GM12878 (cell line): ENCODE measurements at regions of chr6 and their contacts with region 1.

Region 1: DNA sequence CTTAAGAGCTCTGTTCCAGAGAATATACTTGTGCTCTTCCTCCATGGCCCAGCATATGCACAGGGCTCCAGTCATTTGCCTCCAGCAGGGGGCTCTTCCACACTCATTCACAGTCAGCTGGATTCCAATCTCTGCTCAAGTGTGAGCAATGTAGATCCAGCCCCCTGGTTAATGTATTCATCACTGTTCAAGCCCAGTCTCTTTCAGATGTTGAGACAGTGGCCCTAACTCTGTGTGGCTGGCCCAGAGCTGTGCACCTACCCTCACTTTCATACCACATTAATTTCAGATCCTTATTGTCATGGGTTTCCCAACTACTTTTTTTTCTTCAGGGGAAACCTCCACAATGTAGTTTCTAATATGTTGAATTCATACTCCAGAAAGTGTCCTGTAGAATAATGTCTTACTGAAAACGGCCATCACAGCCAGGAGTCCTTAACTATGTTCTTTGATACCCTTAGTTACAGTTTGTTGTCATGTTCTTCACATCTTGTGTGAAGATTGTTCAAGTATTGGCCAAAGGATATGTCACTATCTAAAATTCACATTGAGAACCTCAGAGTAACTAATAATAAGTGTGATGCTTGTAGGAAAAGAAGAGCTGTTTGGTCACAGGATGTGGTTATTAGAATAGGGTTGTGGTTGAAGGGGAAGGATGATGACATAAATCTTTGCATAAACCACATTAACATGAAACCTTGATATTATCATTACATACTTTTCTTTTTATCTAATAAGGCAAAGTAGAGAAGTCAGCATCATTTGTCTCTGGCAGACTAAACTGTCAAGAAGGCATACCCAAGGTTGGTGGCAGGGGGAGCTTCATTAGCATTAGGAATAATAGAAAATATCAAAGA is 14.4 kb upstream of the HLA-DQA1 start:
- DNase-seq: peak; percentile 96
- ATAC-seq: peak; percentile 91
- H3K4me3 ChIP-seq: peak overlapping the region; percentile 54
- H3K27ac ChIP-seq: peak overlapping the region; percentile 98
- H3K4me1 ChIP-seq: peaks cover 24% of the 10 kb centered on the region
- H3K27me3 ChIP-seq: no peaks in the 10 kb centered on the region
- CTCF ChIP-seq: peak; percentile 33 to 49 (median 48); a peak in 5 of 6 replicates
- EP300 ChIP-seq: peak in 1 of 2 experiments; percentile 96
- POLR2A ChIP-seq: peak; percentile 72
- RAD21 ChIP-seq: peak; percentile 40; the same call in 1 of the 2 replicates

Region 2: DNA sequence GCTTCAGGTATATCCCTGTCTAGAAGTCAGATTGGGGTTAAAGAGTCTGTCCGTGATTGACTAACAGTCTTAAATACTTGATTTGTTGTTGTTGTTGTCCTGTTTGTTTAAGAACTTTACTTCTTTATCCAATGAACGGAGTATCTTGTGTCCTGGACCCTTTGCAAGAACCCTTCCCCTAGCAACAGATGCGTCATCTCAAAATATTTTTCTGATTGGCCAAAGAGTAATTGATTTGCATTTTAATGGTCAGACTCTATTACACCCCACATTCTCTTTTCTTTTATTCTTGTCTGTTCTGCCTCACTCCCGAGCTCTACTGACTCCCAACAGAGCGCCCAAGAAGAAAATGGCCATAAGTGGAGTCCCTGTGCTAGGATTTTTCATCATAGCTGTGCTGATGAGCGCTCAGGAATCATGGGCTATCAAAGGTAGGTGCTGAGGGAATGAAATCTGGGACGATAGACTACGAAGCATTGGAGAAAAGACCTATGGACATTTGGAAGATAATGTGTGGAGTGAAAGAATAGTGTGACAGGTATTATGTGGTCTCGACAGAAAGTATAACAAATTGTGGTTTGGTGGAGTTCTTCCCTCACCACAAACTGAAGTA is 183.1 kb before region 1 on chr6 and contains the start of gene HLA-DRA:
- CTCF ChIA-PET with region 1: interaction called, 3 read pairs
- POLR2A ChIA-PET with region 1: interaction called, 11 read pairs
- RAD21 ChIA-PET with region 1: interaction called, 6 read pairs
- SMC1A ChIA-PET with region 1: interaction called, 6 read pairs
- in situ Hi-C with region 1: no loop called
- intact Hi-C with region 1: loop called (anchors 5 kb)
- DNase-seq: peak; percentile 99
- ATAC-seq: peak; percentile 71
- H3K4me3 ChIP-seq: peak within 1 kb of the TSS; percentile 99
- H3K27ac ChIP-seq: peak within 1 kb of the TSS; percentile 100
- H3K4me1 ChIP-seq: peaks cover 29% of the 10 kb centered on the region
- H3K27me3 ChIP-seq: no peaks in the 10 kb centered on the region
- CTCF ChIP-seq: no peak
- EP300 ChIP-seq: peak; percentile 66 to 68; a peak in 3 of 4 replicates
- POLR2A ChIP-seq: peak; percentile 95
- RAD21 ChIP-seq: no peak
- polyA plus RNA-seq, gene HLA-DRA: 4,131 to 6,024 TPM

Region 3: GRCh38 chr6:32522302-32523047 is 100.3 kb before region 1 on chr6:
- CTCF ChIA-PET with region 1: no interaction called
- POLR2A ChIA-PET with region 1: no interaction called
- RAD21 ChIA-PET with region 1: no interaction called
- SMC1A ChIA-PET with region 1: no interaction called
- in situ Hi-C with region 1: no loop called
- intact Hi-C with region 1: no loop called
- DNase-seq: no peak
- ATAC-seq: no peak
- H3K4me3 ChIP-seq: no peak overlapping the region
- H3K27ac ChIP-seq: no peak overlapping the region
- H3K4me1 ChIP-seq: no peaks in the 10 kb centered on the region
- H3K27me3 ChIP-seq: no peaks in the 10 kb centered on the region
- CTCF ChIP-seq: no peak
- EP300 ChIP-seq: no peak
- POLR2A ChIP-seq: no peak
- RAD21 ChIP-seq: no peak

Region 4: GRCh38 chr6:32609731-32610640 is 12.8 kb before region 1 on chr6:
- CTCF ChIA-PET with region 1: interaction called, 13 read pairs
- POLR2A ChIA-PET with region 1: interaction called, 50 read pairs
- RAD21 ChIA-PET with region 1: interaction called, 11 read pairs
- SMC1A ChIA-PET with region 1: interaction called, 36 read pairs
- in situ Hi-C with region 1: no loop called
- intact Hi-C with region 1: loop called (anchors 1 kb)
- DNase-seq: peak; percentile 100
- ATAC-seq: peak; percentile 84
- H3K4me3 ChIP-seq: peak overlapping the region; percentile 3; the same call in 1 of the 2 replicates
- H3K27ac ChIP-seq: peak overlapping the region; percentile 95
- H3K4me1 ChIP-seq: peaks cover 17% of the 10 kb centered on the region
- H3K27me3 ChIP-seq: no peaks in the 10 kb centered on the region
- CTCF ChIP-seq: no peak
- EP300 ChIP-seq: peak; percentile 30 to 68; a peak in 2 of 4 replicates
- POLR2A ChIP-seq: peak; percentile 59; the same call in 1 of the 2 replicates
- RAD21 ChIP-seq: no peak

Region 5: GRCh38 chr6:32642720-32643106 is 19.9 kb after region 1 on chr6:
- CTCF ChIA-PET with region 1: interaction called, 7 read pairs
- POLR2A ChIA-PET with region 1: interaction called, 117 read pairs
- RAD21 ChIA-PET with region 1: interaction called, 102 read pairs
- SMC1A ChIA-PET with region 1: interaction called, 124 read pairs
- in situ Hi-C with region 1: no loop called
- intact Hi-C with region 1: loop called (anchors 2 kb)
- DNase-seq: no peak
- ATAC-seq: peak; percentile 45
- H3K4me3 ChIP-seq: no peak overlapping the region
- H3K27ac ChIP-seq: no peak overlapping the region
- H3K4me1 ChIP-seq: peaks cover 4% of the 10 kb centered on the region
- H3K27me3 ChIP-seq: no peaks in the 10 kb centered on the region
- CTCF ChIP-seq: peak in 1 of 3 experiments; percentile 2; a peak in 1 of 6 replicates
- EP300 ChIP-seq: no peak
- POLR2A ChIP-seq: peak; percentile 53; the same call in 1 of the 2 replicates
- RAD21 ChIP-seq: no peak

Region 6: GRCh38 chr6:32659856-32660595 is 37.3 kb after region 1 on chr6:
- CTCF ChIA-PET with region 1: interaction called, 10 read pairs
- POLR2A ChIA-PET with region 1: interaction called, 30 read pairs
- RAD21 ChIA-PET with region 1: interaction called, 12 read pairs
- SMC1A ChIA-PET with region 1: interaction called, 10 read pairs
- in situ Hi-C with region 1: no loop called
- intact Hi-C with region 1: loop called (anchors 5 kb)
- DNase-seq: no peak
- ATAC-seq: peak; percentile 71
- H3K4me3 ChIP-seq: no peak overlapping the region
- H3K27ac ChIP-seq: peak overlapping the region; percentile 46; the same call in 1 of the 2 replicates
- H3K4me1 ChIP-seq: no peaks in the 10 kb centered on the region; the same call in 1 of the 2 replicates
- H3K27me3 ChIP-seq: no peaks in the 10 kb centered on the region
- CTCF ChIP-seq: no peak
- EP300 ChIP-seq: no peak
- POLR2A ChIP-seq: peak; percentile 35; the same call in 1 of the 2 replicates
- RAD21 ChIP-seq: no peak

Region 7: DNA sequence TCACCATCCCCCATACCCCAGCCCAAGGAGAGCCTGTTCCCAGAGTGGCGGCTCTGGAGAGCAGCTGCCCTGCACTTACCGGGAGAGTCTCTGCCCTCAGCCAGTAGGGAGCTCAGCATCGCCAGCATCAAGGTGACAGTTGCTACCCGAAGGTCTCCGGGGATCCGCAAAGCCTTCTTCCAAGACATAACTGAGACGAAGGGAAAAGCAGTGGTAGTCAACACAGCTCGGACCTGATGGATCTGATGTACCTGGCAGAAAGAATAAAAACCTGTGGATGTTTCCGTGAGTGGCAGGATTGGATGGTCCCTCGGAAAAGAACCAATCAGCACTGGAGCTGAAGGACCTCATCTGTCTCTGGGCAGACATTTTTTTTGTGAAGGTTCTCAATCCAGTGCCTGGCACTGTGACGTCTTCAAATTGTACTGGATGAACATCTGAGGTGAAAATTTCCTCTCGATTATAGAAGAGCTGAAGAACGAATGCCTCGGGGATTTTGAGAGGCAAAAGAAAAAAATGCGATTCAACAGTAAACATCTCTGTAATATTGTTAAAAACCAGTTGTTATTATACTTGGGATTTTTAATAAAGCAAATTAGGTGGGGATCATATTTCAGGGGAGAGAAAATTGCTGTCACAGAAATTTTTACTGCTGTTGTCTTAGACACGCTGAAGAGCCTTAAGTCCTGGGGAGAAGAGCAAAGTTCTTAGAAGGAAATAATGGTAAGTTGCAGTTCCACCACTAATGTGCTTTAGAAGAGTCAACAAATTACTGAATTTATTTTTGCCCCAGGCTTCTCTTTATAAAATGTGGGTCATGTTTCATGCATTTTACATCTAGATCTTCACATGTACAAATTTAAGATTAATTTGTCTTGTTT is 43.9 kb after region 1 on chr6 and contains the start of gene HLA-DQB1:
- CTCF ChIA-PET with region 1: interaction called, 10 read pairs
- POLR2A ChIA-PET with region 1: interaction called, 30 read pairs
- RAD21 ChIA-PET with region 1: interaction called, 12 read pairs
- SMC1A ChIA-PET with region 1: interaction called, 11 read pairs
- in situ Hi-C with region 1: no loop called
- intact Hi-C with region 1: loop called (anchors 5 kb)
- DNase-seq: peak; percentile 77
- ATAC-seq: peak; percentile 70
- H3K4me3 ChIP-seq: peak within 1 kb of the TSS; percentile 55; the same call in 1 of the 2 replicates
- H3K27ac ChIP-seq: peak within 1 kb of the TSS; percentile 92
- H3K4me1 ChIP-seq: peaks cover 22% of the 10 kb centered on the region
- H3K27me3 ChIP-seq: no peaks in the 10 kb centered on the region
- CTCF ChIP-seq: no peak
- EP300 ChIP-seq: no peak
- POLR2A ChIP-seq: peak; percentile 72
- RAD21 ChIP-seq: no peak
- polyA plus RNA-seq, gene HLA-DQB1: 38.1 to 66.1 TPM

Region 8: GRCh38 chr6:32685603-32686002 is 62.8 kb after region 1 on chr6:
- CTCF ChIA-PET with region 1: interaction called, 12 read pairs
- POLR2A ChIA-PET with region 1: interaction called, 8 read pairs
- RAD21 ChIA-PET with region 1: interaction called, 33 read pairs
- SMC1A ChIA-PET with region 1: interaction called, 26 read pairs
- in situ Hi-C with region 1: no loop called
- intact Hi-C with region 1: loop called (anchors 1 kb)
- DNase-seq: peak; percentile 95
- ATAC-seq: peak; percentile 89
- H3K4me3 ChIP-seq: no peak overlapping the region
- H3K27ac ChIP-seq: peak overlapping the region; percentile 40; the same call in 1 of the 2 replicates
- H3K4me1 ChIP-seq: peaks cover 16% of the 10 kb centered on the region; the same call in 1 of the 2 replicates
- H3K27me3 ChIP-seq: no peaks in the 10 kb centered on the region
- CTCF ChIP-seq: no peak
- EP300 ChIP-seq: peak; percentile 74 to 99; a peak in 3 of 4 replicates
- POLR2A ChIP-seq: no peak
- RAD21 ChIP-seq: no peak

Region 9: GRCh38 chr6:32962213-32962826 is 339.5 kb after region 1 on chr6:
- CTCF ChIA-PET with region 1: no interaction called
- POLR2A ChIA-PET with region 1: no interaction called
- RAD21 ChIA-PET with region 1: no interaction called
- SMC1A ChIA-PET with region 1: no interaction called
- in situ Hi-C with region 1: no loop called
- intact Hi-C with region 1: no loop called
- DNase-seq: no peak
- ATAC-seq: no peak
- H3K4me3 ChIP-seq: no peak overlapping the region
- H3K27ac ChIP-seq: no peak overlapping the region
- H3K4me1 ChIP-seq: peaks cover 8% of the 10 kb centered on the region
- H3K27me3 ChIP-seq: no peaks in the 10 kb centered on the region
- CTCF ChIP-seq: no peak
- EP300 ChIP-seq: no peak
- POLR2A ChIP-seq: no peak
- RAD21 ChIP-seq: no peak